AG04450 (cell line): ENCODE measurements at regions of chr7 and their contacts with region 1.

Region 1: DNA sequence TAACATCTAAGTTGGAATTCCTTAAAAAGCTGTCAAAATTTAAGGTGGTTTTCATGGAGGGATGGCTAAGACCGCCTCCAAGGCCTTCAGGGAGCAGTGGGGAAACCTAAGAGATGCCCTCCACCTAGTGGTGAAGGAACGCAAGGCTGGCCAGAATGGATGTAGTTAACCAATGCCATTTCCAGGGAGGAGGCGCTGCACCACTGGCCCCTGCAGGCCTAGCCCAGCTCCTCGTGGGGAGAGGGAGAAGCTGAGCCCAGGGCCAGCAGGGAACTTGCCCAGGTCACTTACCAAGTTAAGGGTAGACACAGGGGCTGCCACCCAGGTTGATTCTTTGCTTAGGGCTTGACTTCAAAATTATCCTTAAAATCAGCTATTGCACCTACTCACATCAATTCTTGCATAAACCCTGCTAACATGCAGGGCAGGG is 32.0 kb downstream of the FIGNL1 start:
- DNase-seq: peak; percentile 36
- H3K4me3 ChIP-seq: no peak overlapping the region
- H3K27ac ChIP-seq: no peak overlapping the region
- H3K27me3 ChIP-seq: peaks cover 3% of the 10 kb centered on the region
- CTCF ChIP-seq: peak; percentile 96

Region 2: DNA sequence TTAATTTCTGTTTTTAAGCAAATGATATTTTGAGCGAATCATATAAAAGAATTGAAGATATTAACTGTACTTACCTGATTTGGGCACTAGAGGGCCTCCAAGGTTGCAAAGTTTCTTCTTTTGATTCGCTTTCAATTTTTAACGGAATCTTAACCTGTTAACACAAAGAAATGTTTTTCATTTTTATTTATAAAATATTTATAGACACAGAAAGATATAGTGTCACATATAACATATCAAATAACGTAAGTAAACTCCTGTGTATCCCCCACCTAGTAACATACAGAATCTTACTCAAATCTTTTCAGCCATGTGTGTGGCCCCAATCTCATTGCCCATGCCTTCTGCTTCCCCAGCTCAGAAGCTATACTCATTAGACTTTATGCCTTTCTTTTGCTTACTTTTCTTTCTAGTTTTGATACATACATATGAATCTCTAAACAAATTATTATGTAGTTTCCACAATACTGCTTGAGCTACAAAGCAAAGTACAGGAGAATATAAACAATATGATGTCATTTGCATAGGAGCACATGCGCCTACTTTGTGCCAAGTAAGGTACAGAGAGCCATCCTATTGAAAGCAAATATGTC is 275.6 kb before region 1 on chr7:
- CTCF ChIA-PET with region 1: interaction called, 23 read pairs
- POLR2A ChIA-PET with region 1: no interaction called
- DNase-seq: no peak
- H3K4me3 ChIP-seq: no peak overlapping the region
- H3K27ac ChIP-seq: no peak overlapping the region
- H3K27me3 ChIP-seq: no peaks in the 10 kb centered on the region
- CTCF ChIP-seq: peak; percentile 71

Region 3: DNA sequence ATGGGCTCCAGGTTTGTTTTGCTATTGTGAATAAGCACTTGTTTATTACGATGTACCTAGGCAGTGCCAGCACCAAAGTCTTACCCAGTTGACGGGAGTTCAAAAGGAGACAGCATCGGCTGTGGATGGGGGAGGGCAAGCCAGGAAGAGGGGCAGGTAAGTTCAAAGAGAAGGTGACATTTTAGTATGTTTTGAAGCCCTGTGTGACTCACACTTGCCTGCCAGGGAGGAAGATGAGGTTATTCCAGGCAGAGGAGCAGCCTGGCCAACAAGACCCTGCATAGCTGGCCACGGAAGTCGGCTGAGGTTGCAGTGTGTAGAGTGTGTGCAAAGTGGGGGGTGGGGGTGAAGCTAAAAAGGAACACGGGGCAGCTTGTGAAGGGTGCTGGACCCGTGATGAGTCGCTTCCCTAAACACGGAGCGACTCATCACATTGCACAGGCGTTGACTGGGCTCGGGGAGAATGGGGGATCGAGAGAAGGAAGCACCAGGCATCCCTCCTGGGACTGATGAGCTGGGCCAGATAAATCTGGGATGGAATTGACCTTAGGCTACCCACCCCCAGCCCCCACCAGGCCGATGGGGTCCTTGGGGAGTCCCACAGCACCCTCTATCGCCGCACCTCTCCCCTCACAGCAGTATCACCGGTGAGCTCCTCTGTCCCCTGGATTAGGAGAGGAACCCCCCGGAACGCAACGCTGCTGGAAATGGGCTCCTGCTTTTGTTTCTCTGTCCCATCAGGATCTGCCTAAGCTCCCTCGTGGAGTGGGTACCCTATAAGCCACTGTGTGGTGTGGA is 211.4 kb before region 1 on chr7:
- CTCF ChIA-PET with region 1: interaction called, 10 read pairs
- POLR2A ChIA-PET with region 1: no interaction called
- DNase-seq: no peak
- H3K4me3 ChIP-seq: no peak overlapping the region
- H3K27ac ChIP-seq: no peak overlapping the region
- H3K27me3 ChIP-seq: no peaks in the 10 kb centered on the region
- CTCF ChIP-seq: no peak

Region 4: GRCh38 chr7:50404392-50404791 is 13.7 kb before region 1 on chr7:
- CTCF ChIA-PET with region 1: interaction called, 4 read pairs
- POLR2A ChIA-PET with region 1: interaction called, 10 read pairs
- DNase-seq: no peak
- H3K4me3 ChIP-seq: no peak overlapping the region
- H3K27ac ChIP-seq: no peak overlapping the region
- H3K27me3 ChIP-seq: peaks cover 11% of the 10 kb centered on the region
- CTCF ChIP-seq: no peak

Region 5: DNA sequence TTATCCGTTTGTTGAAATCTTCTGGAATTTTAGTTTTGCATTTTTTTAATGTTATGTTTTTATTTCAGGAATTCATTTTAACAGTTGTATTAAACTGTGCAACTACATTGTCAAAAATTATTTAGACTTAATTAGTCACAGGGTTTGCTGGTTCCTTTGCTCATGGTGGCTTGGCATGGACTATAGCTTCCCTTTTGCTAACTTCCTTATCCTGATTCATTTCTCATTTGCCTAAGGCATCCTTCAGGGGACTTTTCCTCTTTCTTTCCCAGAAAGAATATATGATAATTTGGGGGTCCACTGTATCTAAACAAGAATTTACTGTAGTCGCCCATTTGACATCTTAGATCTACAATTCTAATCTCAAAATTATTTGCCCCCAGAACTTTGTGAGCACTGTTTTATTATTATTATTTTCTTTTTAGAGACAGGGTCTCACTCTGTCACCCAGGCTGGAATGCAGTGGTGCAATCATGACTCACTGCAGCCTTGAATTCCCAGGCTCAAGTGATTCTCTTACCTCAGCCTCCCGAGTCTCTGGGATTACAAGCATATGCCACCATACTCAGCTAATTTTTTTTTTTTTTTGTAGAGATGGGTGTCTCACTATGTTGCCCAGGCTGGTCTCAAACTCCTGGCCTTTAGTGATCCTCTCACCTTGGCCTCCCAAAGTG is 18.2 kb after region 1 on chr7:
- CTCF ChIA-PET with region 1: interaction called, 22 read pairs
- POLR2A ChIA-PET with region 1: no interaction called
- DNase-seq: peak; percentile 27
- H3K4me3 ChIP-seq: no peak overlapping the region
- H3K27ac ChIP-seq: no peak overlapping the region
- H3K27me3 ChIP-seq: no peaks in the 10 kb centered on the region
- CTCF ChIP-seq: no peak

Region 6: DNA sequence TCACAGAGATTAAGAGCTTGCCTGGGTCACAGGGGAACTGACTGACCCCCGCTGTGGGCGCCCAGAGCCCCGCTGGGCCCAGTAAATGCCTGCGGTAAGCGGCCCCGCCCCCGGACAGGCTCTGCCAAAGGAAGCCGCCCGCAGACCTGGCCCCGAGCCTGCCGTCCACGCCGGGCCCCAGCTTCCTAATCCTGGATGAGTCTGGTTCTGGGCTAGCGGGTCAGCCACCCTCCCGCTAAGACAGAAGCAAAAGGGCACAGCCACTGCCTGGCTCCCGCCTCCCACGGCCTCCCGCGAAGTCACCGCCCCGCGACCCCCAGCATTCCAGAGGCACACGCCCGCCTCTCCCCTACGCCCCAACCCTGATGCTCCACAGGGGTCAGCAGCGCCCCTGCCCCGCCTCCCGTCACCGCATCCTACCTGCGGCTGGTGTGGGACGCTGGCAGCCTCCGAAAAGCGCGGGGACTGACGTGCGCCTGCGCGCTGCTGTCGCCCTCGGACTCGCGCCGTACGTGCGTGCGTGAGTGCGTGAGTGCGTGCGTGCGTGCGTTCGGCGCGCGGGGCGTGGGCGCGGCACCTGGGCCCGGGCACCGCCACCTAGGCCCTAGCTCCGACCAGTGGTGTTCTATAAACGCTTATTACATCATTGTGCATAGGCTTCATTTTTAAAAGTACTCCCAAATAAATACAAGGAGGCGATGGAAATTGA is 31.9 kb after region 1 on chr7 and contains the start of gene FIGNL1:
- CTCF ChIA-PET with region 1: interaction called, 10 read pairs
- POLR2A ChIA-PET with region 1: no interaction called
- DNase-seq: peak; percentile 24
- H3K4me3 ChIP-seq: peak within 1 kb of the TSS; percentile 90
- H3K27ac ChIP-seq: peak within 1 kb of the TSS; percentile 39
- H3K27me3 ChIP-seq: peaks cover 2% of the 10 kb centered on the region
- CTCF ChIP-seq: no peak
- polyA plus RNA-seq, gene FIGNL1: 7.1 and 9.5 TPM in 2 replicates